CD4-positive, alpha-beta T cell (primary cell): ENCODE measurements at regions of chr2 and their contacts with region 1.

Region 1: DNA sequence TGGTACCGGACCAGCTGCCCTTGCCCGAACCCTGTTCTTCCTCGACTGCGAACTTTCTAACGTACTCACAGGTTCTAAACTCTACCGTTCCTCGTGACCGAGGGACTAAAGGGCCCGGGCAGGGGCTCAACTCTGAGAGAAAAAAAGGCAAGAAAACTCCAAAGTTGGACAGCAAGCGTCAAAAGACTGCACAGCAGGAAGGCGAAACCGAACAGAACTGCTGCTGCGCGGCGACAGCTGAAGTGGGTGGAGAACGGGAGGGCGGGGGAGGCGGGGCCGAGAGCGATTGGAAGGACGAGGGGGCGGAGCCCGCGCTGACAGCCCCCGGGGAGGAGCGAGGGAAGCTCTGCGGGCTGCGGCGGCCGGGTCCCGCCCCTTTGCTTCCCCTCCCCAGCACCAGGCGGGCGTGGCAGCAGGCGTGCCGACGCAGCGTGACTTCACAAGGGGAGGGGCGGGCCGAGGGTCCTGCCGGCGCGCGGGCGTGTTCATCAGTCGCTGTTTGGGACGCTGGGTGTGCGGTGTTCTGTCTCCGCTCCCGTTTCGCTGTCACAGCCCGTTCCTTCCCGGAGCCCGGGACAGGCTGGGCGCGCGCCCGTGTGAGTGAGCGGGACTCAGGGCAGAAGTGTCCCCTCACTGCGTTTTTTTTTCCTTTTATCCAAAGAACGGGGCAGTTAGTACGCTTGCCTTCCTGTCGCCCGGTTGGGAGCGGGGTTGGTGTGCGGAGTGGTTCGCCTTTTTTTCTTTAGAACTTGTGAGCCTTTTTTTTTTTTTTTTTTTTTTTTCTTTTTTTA is at the start of gene NABP1:
- DNase-seq: peak; percentile 98 to 100 (median 99)
- ATAC-seq: peak; percentile 86
- H3K4me3 ChIP-seq: peak within 1 kb of the TSS; percentile 78
- H3K4me3 Mint-ChIP-seq: peak within 1 kb of the TSS; percentile 97
- H3K27ac ChIP-seq: peak within 1 kb of the TSS; percentile 90 to 94
- H3K27ac Mint-ChIP-seq: peak within 1 kb of the TSS; percentile 100
- H3K4me1 ChIP-seq: peaks cover 44% of the 10 kb centered on the region
- H3K4me1 Mint-ChIP-seq: peaks cover 75% of the 10 kb centered on the region
- H3K27me3 ChIP-seq: no peaks in the 10 kb centered on the region
- H3K27me3 Mint-ChIP-seq: no peaks in the 10 kb centered on the region
- CTCF ChIP-seq: no peak
- total RNA-seq, gene NABP1: 32.0 to 32.9 TPM

Region 2: GRCh38 chr2:190408538-190409271 is 1269.1 kb before region 1 on chr2:
- CTCF ChIA-PET with region 1: no interaction called
- POLR2A ChIA-PET with region 1: interaction called, 6 read pairs
- intact Hi-C with region 1: loop called in 1 of 2 experiments (anchors 5 kb)
- DNase-seq: peak; percentile 61 to 91 (median 72)
- ATAC-seq: peak; percentile 49
- H3K4me3 ChIP-seq: peak overlapping the region; percentile 79
- H3K4me3 Mint-ChIP-seq: peak overlapping the region; percentile 94
- H3K27ac ChIP-seq: peak overlapping the region; percentile 95 to 99
- H3K27ac Mint-ChIP-seq: peak overlapping the region; percentile 97
- H3K4me1 ChIP-seq: peaks cover 40% of the 10 kb centered on the region
- H3K4me1 Mint-ChIP-seq: peaks cover 45% of the 10 kb centered on the region
- H3K27me3 ChIP-seq: no peaks in the 10 kb centered on the region
- H3K27me3 Mint-ChIP-seq: no peaks in the 10 kb centered on the region
- CTCF ChIP-seq: no peak

Region 3: GRCh38 chr2:191150600-191151330 is 527.1 kb before region 1 on chr2 and contains the start of gene STAT4:
- CTCF ChIA-PET with region 1: no interaction called
- POLR2A ChIA-PET with region 1: interaction called, 23 read pairs
- intact Hi-C with region 1: loop called in 1 of 2 experiments (anchors 10 kb)
- DNase-seq: peak; percentile 52 to 96 (median 72)
- ATAC-seq: peak; percentile 83
- H3K4me3 ChIP-seq: peak within 1 kb of the TSS; percentile 83
- H3K4me3 Mint-ChIP-seq: peak within 1 kb of the TSS; percentile 89
- H3K27ac ChIP-seq: peak within 1 kb of the TSS; percentile 93
- H3K27ac Mint-ChIP-seq: peak within 1 kb of the TSS; percentile 96
- H3K4me1 ChIP-seq: peaks cover 33% of the 10 kb centered on the region
- H3K4me1 Mint-ChIP-seq: peaks cover 50% of the 10 kb centered on the region
- H3K27me3 ChIP-seq: no peaks in the 10 kb centered on the region
- H3K27me3 Mint-ChIP-seq: no peaks in the 10 kb centered on the region
- CTCF ChIP-seq: no peak
- total RNA-seq, gene STAT4: 77.1 to 83.0 TPM

Region 4: GRCh38 chr2:191508738-191509137 is 169.1 kb before region 1 on chr2:
- CTCF ChIA-PET with region 1: no interaction called
- POLR2A ChIA-PET with region 1: no interaction called
- intact Hi-C with region 1: no loop called
- DNase-seq: no peak
- ATAC-seq: no peak
- H3K4me3 ChIP-seq: no peak overlapping the region
- H3K4me3 Mint-ChIP-seq: no peak overlapping the region
- H3K27ac ChIP-seq: no peak overlapping the region
- H3K27ac Mint-ChIP-seq: no peak overlapping the region
- H3K4me1 ChIP-seq: no peaks in the 10 kb centered on the region
- H3K4me1 Mint-ChIP-seq: no peaks in the 10 kb centered on the region
- H3K27me3 ChIP-seq: no peaks in the 10 kb centered on the region
- H3K27me3 Mint-ChIP-seq: peaks cover 7% of the 10 kb centered on the region
- CTCF ChIP-seq: no peak

Region 5: GRCh38 chr2:191611614-191612013 is 66.2 kb before region 1 on chr2:
- CTCF ChIA-PET with region 1: no interaction called
- POLR2A ChIA-PET with region 1: interaction called, 220 read pairs
- intact Hi-C with region 1: loop called in 1 of 2 experiments (anchors 2 kb)
- DNase-seq: peak in 2 of 14 experiments; percentile 46 to 47
- ATAC-seq: no peak
- H3K4me3 ChIP-seq: no peak overlapping the region
- H3K4me3 Mint-ChIP-seq: no peak overlapping the region
- H3K27ac ChIP-seq: no peak overlapping the region
- H3K27ac Mint-ChIP-seq: no peak overlapping the region
- H3K4me1 ChIP-seq: no peaks in the 10 kb centered on the region
- H3K4me1 Mint-ChIP-seq: peaks cover 6% of the 10 kb centered on the region
- H3K27me3 ChIP-seq: no peaks in the 10 kb centered on the region
- H3K27me3 Mint-ChIP-seq: no peaks in the 10 kb centered on the region
- CTCF ChIP-seq: no peak

Region 6: GRCh38 chr2:191637182-191638078 is 40.4 kb before region 1 on chr2:
- CTCF ChIA-PET with region 1: interaction called, 3 read pairs
- POLR2A ChIA-PET with region 1: interaction called, 276 read pairs
- intact Hi-C with region 1: no loop called
- DNase-seq: peak in 4 of 14 experiments; percentile 35 to 70 (median 68)
- ATAC-seq: peak; percentile 97
- H3K4me3 ChIP-seq: no peak overlapping the region
- H3K4me3 Mint-ChIP-seq: peak overlapping the region; percentile 8
- H3K27ac ChIP-seq: peak overlapping the region in 1 of 2 donors; percentile 42
- H3K27ac Mint-ChIP-seq: peak overlapping the region; percentile 81
- H3K4me1 ChIP-seq: peaks cover 23% of the 10 kb centered on the region
- H3K4me1 Mint-ChIP-seq: peaks cover 63% of the 10 kb centered on the region
- H3K27me3 ChIP-seq: no peaks in the 10 kb centered on the region
- H3K27me3 Mint-ChIP-seq: no peaks in the 10 kb centered on the region
- CTCF ChIP-seq: no peak